Activated naive CD4-positive, alpha-beta T cell treated with anti-CD3 and anti-CD28 coated beads for 36 hours (primary cell): ENCODE measurements at regions of chr16 and their contacts with region 1.

Region 1: DNA sequence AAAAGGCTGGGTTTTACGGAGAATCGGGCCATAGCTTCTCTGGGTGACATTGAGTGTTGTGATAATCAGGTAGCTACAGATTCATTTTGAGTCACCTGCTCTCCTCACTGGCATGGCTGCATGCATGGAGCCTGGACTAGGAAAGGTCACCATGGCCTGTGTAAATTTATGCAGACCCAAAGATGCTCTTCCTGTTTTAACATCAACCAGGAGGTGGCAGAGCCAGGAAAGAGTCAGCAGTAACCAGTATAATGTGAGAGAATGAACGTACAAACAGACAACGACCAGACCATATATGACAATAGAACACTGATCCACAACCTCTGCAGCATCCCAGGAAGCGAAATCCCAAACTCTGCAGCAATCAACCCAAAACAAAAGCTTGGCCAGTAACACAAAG is 40.3 kb upstream of the DYNLRB2 start:
- DNase-seq: peak; percentile 5
- H3K4me3 Mint-ChIP-seq: no peak overlapping the region
- H3K27ac Mint-ChIP-seq: peak overlapping the region; percentile 21
- H3K4me1 Mint-ChIP-seq: peaks cover 20% of the 10 kb centered on the region
- H3K27me3 Mint-ChIP-seq: no peaks in the 10 kb centered on the region

Region 2: DNA sequence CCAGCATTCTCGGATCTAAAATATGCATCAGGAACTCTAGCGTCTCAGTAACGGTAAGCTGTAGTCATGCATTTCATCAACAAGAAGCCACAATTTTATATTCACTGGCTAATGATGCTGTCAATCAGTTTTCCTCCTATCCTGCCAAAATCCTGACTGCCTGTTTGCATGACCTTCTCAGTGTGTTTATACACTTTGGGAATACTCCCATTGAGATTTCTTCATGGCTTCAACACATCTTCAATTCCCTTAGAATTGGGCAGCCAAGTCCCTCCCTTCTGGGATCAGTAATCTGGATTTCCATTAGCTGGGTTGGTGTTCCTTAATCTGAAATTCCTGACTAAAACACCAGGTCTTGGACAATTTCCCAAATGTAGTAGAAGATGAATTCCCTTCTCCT is 308.6 kb before region 1 on chr16:
- CTCF ChIA-PET with region 1: no interaction called
- intact Hi-C with region 1: no loop called
- DNase-seq: no peak
- H3K4me3 Mint-ChIP-seq: no peak overlapping the region
- H3K27ac Mint-ChIP-seq: no peak overlapping the region
- H3K4me1 Mint-ChIP-seq: no peaks in the 10 kb centered on the region
- H3K27me3 Mint-ChIP-seq: peaks cover 6% of the 10 kb centered on the region

Region 3: GRCh38 chr16:80518436-80518835 is 17.9 kb after region 1 on chr16:
- CTCF ChIA-PET with region 1: interaction called, 4 read pairs
- intact Hi-C with region 1: loop called (anchors 1 kb)
- DNase-seq: peak; percentile 71
- H3K4me3 Mint-ChIP-seq: no peak overlapping the region
- H3K27ac Mint-ChIP-seq: no peak overlapping the region
- H3K4me1 Mint-ChIP-seq: peaks cover 21% of the 10 kb centered on the region
- H3K27me3 Mint-ChIP-seq: peaks cover 20% of the 10 kb centered on the region